Psoas muscle (tissue), 8 donors: ENCODE measurements at regions of chr20 and their contacts with region 1.

Region 1: DNA sequence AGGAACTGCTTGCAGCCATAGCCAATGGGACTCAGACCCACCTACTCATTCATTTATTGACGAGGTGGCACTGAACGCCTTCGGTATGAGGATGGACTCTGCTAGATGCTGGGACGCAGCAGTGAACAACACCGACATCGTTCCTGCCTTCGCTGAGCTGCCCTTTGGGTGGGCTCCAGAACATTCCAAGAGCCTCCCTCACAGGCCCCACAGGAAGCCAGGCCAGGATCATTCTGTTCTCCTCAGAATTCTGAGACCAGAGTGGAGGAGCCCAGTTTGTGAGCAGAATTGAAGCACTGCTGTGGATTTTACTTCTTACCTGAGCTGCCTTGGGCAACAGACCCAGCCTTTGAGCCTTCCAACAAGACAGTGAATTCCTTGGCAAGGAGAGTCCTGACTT is 82.1 kb downstream of the KCNB1 start:
- DNase-seq: peak; percentile 64 to 79
- ATAC-seq: peak in 3 of 4 donors; percentile 41 to 68 (median 46)
- H3K4me3 ChIP-seq: no peak overlapping the region
- H3K27ac ChIP-seq: peak overlapping the region; percentile 81
- H3K4me1 ChIP-seq: peaks cover 12% of the 10 kb centered on the region
- H3K27me3 ChIP-seq: no peaks in the 10 kb centered on the region
- CTCF ChIP-seq: no peak

Region 2: DNA sequence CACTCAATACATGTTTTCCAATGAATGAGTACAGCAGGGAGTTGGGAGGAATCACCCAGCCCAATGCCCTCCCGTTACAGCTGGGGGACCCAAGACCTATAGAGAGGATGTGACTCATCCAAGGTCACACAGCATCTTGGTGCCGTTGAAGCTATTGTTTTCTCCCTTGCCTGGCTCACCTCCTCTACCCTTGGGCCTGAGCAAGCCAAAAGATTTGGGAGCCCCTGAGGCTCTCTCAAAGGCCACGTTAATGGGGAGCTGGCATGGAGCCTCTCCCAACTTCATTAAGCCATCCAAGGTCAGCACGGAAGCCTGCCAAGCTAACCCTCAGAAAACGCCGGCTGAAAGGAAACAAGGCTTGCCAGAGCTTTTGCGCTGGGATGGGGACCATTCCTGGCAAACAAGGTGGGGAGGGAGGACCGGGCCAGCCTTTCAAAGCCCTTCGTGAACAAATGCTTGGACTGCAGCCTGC is 51.6 kb after region 1 on chr20:
- intact Hi-C with region 1: loop called in 1 of 2 experiments (anchors 5 kb)
- DNase-seq: peak; percentile 52 to 59
- ATAC-seq: peak in 3 of 4 donors; percentile 23 to 47 (median 28)
- H3K4me3 ChIP-seq: no peak overlapping the region
- H3K27ac ChIP-seq: no peak overlapping the region
- H3K4me1 ChIP-seq: no peaks in the 10 kb centered on the region
- H3K27me3 ChIP-seq: no peaks in the 10 kb centered on the region
- CTCF ChIP-seq: no peak